GM13976 (cell line): ENCODE measurements at regions of chr18 and their contacts with region 1.

Region 1: GRCh38 chr18:55781481-55781957 is 193.5 kb upstream of the TCF4 start:
- DNase-seq: peak; percentile 9
- CTCF ChIP-seq: no peak

Region 2: GRCh38 chr18:55415258-55415871 is 366.2 kb before region 1 on chr18:
- in situ Hi-C with region 1: loop called (anchors 25 kb)
- DNase-seq: peak; percentile 49
- CTCF ChIP-seq: peak; percentile 75

Region 3: GRCh38 chr18:55529581-55529980 is 251.9 kb before region 1 on chr18:
- in situ Hi-C with region 1: no loop called
- DNase-seq: no peak
- CTCF ChIP-seq: no peak